Motor neuron (in vitro differentiated cells): ENCODE measurements at regions of chr13 and their contacts with region 1.

Region 1: DNA sequence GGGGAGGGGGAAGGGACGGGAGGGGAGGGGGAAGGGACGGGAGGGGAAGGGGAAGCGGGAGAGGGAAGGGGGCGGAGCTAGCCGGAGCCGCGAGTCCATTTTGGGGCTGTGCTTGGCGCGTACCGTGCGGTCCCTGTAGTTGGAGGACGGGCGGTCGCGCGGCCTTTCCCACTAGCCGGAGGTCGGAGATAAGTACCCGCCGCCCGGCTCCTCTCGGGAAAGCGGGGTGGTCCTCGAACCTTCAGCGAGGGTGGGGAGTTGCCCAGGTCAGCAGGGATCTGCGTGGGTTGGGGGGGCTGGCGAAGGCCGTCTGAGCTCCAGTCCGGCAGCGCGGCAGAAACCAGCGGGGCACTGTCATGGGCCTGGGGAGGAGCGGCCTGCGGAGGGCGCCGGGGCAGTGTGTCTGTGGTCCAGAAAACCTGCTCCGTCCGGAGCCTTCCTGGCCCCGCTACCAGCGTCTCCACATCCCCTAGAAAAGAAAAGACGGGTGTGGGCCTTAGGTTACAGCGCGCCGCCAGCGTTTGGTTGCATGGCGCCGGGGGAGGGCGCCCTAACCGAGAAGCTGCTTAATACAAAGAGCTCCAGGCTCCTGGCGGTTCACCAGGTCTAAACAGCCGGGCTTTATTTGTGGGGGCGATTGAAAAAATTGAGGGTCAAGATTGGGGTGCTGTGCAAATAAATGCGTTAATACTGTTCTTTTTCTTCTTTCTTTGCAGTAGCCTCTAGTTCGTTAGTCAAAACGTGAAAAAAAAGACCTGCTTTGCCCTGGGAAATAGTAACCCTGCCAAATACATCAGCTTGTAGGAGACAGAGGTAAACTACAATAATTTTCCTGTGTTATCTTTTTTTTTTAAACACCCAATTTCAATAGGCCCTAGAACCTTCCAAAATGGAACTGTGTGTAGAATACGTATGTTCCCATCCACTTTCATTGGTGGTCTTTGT is at the start of gene TRIM13:
- ATAC-seq: peak; percentile 80 to 91 (median 86)
- H3K4me3 ChIP-seq: peak within 1 kb of the TSS; percentile 76 to 90 (median 84)
- H3K27ac ChIP-seq: peak within 1 kb of the TSS; percentile 90 to 94
- H3K4me1 ChIP-seq: peaks cover 18 to 27% of the 10 kb centered on the region in 2 donors
- total RNA-seq, gene TRIM13: 16.3 to 40.2 (median 26.8) TPM

Region 2: DNA sequence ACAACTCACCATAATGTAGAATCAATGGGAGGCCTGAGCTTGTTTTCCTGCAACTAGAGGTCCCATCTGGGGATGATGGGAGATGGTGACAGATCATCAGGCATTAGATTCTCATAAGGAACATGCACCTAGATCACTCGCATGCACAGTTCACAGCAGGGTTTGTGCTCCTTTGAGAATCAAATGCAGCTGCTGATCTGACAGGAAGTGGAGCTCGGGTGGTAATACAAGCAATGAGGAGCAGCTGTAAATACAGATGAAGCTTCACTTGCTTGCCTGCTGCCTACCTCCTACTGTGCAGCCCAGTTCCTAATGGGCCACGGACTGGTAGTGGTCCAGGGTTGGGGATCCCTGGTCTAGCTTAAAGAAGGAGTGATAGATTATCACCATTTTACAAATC is 237.7 kb before region 1 on chr13:
- in situ Hi-C with region 1: no loop called
- ATAC-seq: no peak
- H3K4me3 ChIP-seq: no peak overlapping the region
- H3K27ac ChIP-seq: no peak overlapping the region
- H3K4me1 ChIP-seq: no peaks in the 10 kb centered on the region

Region 3: DNA sequence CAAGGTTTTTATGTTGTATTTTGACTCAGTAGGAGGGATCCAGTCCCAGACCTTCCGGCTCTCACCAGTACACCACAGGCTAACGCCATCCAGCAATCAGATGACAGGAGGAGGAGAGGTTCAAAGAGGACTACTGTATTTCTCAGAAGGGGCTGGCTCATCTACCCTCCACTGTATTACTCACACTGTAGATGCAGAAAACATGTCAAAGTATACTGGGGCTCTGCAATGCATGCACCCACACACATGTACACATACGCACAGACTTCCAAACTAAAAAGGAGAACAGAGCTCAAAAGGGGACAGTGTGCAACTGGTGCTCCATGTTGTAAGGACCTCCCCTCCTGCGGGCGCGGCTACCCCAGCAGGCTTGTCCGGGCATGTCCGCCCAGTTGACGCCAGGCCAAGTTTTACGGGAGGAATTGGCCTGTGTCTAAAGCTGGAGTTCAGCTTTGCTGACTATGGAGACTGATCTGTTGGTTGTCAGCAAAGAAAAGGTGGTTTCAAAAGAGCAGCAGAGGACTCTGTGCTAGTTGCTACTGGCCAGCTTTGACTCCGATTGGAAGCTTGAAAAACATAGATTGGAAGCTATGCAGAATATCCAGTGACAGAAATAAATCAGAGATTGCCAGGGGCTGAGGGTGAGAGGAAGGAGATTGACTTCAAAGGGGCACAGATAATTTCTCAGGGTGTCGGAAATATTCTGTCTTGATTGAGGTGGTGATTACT is 532.1 kb after region 1 on chr13:
- in situ Hi-C with region 1: loop called in 1 of 9 experiments (anchors 25 kb)
- ATAC-seq: peak; percentile 45 to 96 (median 76)
- H3K4me3 ChIP-seq: no peak overlapping the region
- H3K27ac ChIP-seq: no peak overlapping the region
- H3K4me1 ChIP-seq: peaks cover 6 to 10% of the 10 kb centered on the region in 2 donors

Region 4: DNA sequence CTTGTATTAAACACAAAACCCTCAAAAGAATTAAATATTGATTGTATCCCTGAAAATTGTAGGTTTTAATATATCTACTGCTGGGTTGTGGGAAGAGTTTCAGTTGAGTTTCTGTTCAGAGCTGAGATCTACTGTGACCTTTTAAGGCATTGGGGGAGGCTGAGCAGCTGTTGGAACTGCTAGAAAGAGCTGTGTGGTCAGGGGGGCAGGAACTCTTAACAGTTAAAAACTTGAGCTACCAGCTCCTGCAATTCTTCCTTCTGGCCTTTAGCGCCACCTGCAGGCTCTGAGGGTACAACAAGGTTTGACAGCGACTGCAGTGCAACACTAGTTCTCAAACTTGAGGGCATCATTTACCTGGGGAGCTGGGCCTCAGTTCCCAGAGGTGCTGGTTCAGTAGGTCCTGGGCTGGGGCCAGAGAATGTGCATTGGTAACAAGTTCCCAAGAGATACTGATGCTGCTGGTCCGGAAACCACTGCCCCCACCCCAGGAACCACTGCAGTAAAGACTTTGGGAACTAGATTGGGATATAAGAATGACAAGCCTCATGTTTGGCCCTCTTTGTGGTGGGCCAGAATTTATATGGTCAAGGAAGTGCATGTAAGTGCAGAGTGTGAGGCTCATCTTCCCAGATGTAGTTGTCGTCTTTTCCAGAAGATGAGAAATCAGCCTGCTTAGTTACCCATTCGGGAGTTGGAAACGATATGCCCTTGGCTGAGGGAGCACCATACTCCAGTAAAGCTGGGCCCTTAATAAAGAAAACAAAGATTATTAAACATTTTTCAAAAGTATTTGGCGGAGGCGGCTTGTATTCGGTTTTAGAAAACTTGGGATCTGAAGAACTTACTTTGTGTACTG is 914.9 kb after region 1 on chr13:
- in situ Hi-C with region 1: loop called in 4 of 9 experiments (anchors 25 kb)
- ATAC-seq: peak in 4 of 8 experiments; percentile 6 to 28 (median 15)
- H3K4me3 ChIP-seq: peak overlapping the region in 1 of 5 donors; percentile 0
- H3K27ac ChIP-seq: no peak overlapping the region
- H3K4me1 ChIP-seq: peaks cover 5 to 8% of the 10 kb centered on the region in 2 donors

Region 5: DNA sequence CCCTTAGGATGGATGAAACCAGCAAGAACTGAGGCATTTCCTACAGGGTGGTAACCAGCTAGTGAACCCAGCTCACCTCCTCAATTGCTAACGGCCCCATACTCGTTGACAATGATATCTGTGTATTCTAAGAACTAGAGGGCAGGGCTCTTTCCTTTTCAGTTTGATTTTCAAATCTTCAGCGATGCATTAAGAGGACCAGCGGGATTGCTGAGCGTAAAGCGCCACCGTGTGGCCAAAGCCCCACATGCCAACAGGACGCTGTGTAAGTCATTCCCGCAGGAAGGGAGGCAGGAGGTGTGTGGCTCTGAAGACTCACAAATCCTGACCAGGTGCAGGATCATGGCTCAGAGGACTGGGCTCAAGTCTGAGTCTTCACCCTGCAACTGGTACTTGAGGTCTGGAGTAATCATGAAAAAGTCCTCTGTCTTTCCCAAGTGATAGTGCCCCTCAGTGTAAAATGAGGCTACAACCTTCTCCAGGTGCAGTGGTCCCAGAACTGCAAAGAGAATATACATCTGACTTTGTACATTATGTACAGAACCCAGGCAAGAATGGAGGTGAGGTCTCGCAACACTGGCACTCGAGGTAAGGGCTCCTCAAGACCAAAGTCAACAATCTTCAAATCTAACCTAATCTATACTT is 1072.9 kb after region 1 on chr13:
- in situ Hi-C with region 1: loop called in 1 of 9 experiments (anchors 25 kb)
- ATAC-seq: peak; percentile 87 to 98 (median 92)
- H3K4me3 ChIP-seq: no peak overlapping the region
- H3K27ac ChIP-seq: no peak overlapping the region
- H3K4me1 ChIP-seq: peaks cover 12 to 19% of the 10 kb centered on the region in 2 donors